Panc1 (cell line): ENCODE measurements at regions of chr4 and their contacts with region 1.

Region 1: GRCh38 chr4:52376132-52376704 is 282.9 kb downstream of the USP46 start:
- DNase-seq: peak; percentile 12
- ATAC-seq: no peak
- H3K4me3 ChIP-seq: no peak overlapping the region
- H3K27ac ChIP-seq: no peak overlapping the region
- H3K4me1 ChIP-seq: no peaks in the 10 kb centered on the region
- H3K27me3 ChIP-seq: no peaks in the 10 kb centered on the region
- CTCF ChIP-seq: peak; percentile 63; the same call in 1 of the 2 replicates

Region 2: DNA sequence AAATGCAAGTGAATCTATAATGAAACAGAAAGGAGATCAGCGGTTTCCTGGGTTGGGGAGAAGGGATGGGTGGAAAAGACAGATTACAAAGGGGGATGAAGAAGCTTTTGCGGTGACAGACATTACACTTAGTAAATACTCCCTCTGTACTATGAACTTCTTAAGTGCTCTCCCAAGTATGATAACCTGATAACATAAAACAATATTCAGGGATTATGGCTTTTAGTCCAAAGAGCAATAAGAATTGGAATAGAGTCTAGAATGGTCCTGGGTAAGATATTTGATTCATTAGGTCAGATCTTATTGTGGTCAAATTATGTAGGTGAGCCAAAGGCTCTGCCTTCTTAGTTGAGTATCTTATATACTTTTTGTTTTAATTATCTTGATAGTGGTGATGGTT is 365.2 kb before region 1 on chr4:
- CTCF ChIA-PET with region 1: no interaction called
- POLR2A ChIA-PET with region 1: no interaction called
- in situ Hi-C with region 1: no loop called
- intact Hi-C with region 1: no loop called
- DNase-seq: no peak
- ATAC-seq: no peak
- H3K4me3 ChIP-seq: no peak overlapping the region
- H3K27ac ChIP-seq: no peak overlapping the region
- H3K4me1 ChIP-seq: no peaks in the 10 kb centered on the region
- H3K27me3 ChIP-seq: no peaks in the 10 kb centered on the region
- CTCF ChIP-seq: no peak

Region 3: GRCh38 chr4:52329894-52330293 is 46.3 kb before region 1 on chr4:
- CTCF ChIA-PET with region 1: no interaction called
- POLR2A ChIA-PET with region 1: no interaction called
- in situ Hi-C with region 1: no loop called
- intact Hi-C with region 1: no loop called
- DNase-seq: no peak
- ATAC-seq: no peak
- H3K4me3 ChIP-seq: no peak overlapping the region
- H3K27ac ChIP-seq: no peak overlapping the region
- H3K4me1 ChIP-seq: no peaks in the 10 kb centered on the region
- H3K27me3 ChIP-seq: no peaks in the 10 kb centered on the region
- CTCF ChIP-seq: no peak

Region 4: DNA sequence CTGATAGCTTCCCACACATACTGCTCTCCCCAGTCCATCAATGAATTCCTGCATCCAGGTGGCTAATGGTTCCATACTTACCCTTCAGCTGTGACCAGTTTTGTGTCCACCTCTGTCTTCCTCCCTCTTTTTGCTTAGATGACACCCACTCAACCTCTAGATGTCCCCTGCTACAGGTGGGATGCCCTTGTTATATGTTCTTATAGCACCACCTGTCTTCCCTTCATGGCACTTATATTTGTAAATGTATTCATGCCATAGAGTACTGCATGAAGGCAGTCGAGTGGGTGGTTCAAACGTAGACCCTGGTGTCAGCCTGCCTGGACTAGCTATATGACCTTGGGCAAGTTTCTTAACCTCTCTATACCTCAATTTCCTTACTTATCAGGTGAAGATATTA is 289.4 kb after region 1 on chr4:
- CTCF ChIA-PET with region 1: no interaction called
- POLR2A ChIA-PET with region 1: no interaction called
- in situ Hi-C with region 1: no loop called
- intact Hi-C with region 1: loop called (anchors 2 kb)
- DNase-seq: peak; percentile 24
- ATAC-seq: peak; percentile 80
- H3K4me3 ChIP-seq: no peak overlapping the region
- H3K27ac ChIP-seq: no peak overlapping the region
- H3K4me1 ChIP-seq: no peaks in the 10 kb centered on the region
- H3K27me3 ChIP-seq: no peaks in the 10 kb centered on the region
- CTCF ChIP-seq: peak; percentile 46

Region 5: GRCh38 chr4:52968691-52969090 is 592.5 kb after region 1 on chr4:
- CTCF ChIA-PET with region 1: no interaction called
- POLR2A ChIA-PET with region 1: no interaction called
- in situ Hi-C with region 1: no loop called
- intact Hi-C with region 1: no loop called
- DNase-seq: no peak
- ATAC-seq: no peak
- H3K4me3 ChIP-seq: no peak overlapping the region
- H3K27ac ChIP-seq: no peak overlapping the region
- H3K4me1 ChIP-seq: no peaks in the 10 kb centered on the region
- H3K27me3 ChIP-seq: no peaks in the 10 kb centered on the region
- CTCF ChIP-seq: no peak